Activated B cell treated with CpG ODN at 0.5 μM for 24 hours (primary cell): ENCODE measurements at regions of chr10 and their contacts with region 1.

Region 1: GRCh38 chr10:112471878-112472487 is 25.0 kb downstream of the VTI1A start:
- DNase-seq: no peak
- ATAC-seq: peak; percentile 52
- H3K4me3 Mint-ChIP-seq: no peak overlapping the region
- H3K27ac Mint-ChIP-seq: no peak overlapping the region
- H3K4me1 Mint-ChIP-seq: peaks cover 4% of the 10 kb centered on the region
- H3K27me3 Mint-ChIP-seq: no peaks in the 10 kb centered on the region
- CTCF ChIP-seq: peak; percentile 63

Region 2: DNA sequence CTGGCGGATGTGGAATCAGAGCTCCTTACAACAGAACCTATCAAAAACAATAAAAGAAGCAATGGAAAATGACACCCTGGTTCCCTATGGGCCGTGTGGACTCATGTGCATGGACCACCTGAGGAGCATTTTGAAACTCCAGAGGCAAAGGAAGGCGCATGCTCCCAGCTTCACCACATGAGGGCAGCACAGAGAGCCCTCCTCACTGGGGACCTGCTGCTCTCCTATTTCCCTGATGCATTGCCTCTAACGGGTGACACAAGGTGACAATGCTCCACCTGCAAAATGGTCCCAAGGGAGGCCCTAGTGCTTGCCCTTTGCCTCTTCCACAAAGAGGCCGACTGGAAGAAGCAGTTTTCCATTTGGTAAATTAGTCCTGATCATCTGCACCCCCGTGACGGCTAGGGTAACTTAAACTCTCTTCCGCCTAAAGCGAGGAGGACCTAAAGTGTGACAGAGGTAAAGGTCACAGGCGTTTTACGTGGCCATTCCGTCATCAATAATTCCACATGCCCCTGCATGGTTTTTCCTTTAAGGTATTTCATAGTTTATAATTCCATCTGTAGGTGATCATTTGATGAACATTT is 356.1 kb before region 1 on chr10:
- CTCF ChIA-PET with region 1: no interaction called
- POLR2A ChIA-PET with region 1: no interaction called
- intact Hi-C with region 1: loop called (anchors 5 kb)
- DNase-seq: no peak
- ATAC-seq: peak; percentile 54
- H3K4me3 Mint-ChIP-seq: no peak overlapping the region
- H3K27ac Mint-ChIP-seq: no peak overlapping the region
- H3K4me1 Mint-ChIP-seq: no peaks in the 10 kb centered on the region
- H3K27me3 Mint-ChIP-seq: no peaks in the 10 kb centered on the region
- CTCF ChIP-seq: no peak

Region 3: DNA sequence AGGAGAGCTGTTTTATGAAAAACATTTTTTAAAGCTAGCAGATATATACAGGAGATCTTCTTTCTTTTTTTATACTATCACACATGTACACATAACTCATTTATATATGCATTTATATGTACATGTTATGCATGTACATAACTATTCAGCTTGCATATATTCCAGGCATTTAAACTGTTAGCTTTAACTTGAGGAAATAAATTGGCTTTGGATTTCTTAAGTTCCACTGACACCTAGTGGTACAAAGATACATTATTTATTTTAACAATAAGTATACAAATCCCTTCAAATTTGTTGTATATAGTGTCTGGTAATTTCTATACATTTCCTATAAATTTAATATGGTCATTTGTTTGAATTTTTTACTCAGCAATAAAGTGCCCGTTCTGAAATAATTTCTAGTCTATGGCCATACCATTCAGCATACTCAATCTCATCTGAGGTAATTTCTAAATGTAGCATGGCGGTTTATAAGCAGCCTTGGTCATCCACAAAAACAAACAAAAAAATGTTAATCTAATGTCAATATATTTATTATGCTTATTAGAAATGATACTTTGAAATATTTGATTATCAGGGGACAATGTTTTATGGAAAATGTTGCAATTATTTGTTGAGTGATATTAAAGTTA is 36.9 kb before region 1 on chr10:
- CTCF ChIA-PET with region 1: interaction called, 8 read pairs
- POLR2A ChIA-PET with region 1: no interaction called
- intact Hi-C with region 1: loop called (anchors 5 kb)
- DNase-seq: no peak
- ATAC-seq: no peak
- H3K4me3 Mint-ChIP-seq: no peak overlapping the region
- H3K27ac Mint-ChIP-seq: no peak overlapping the region
- H3K4me1 Mint-ChIP-seq: no peaks in the 10 kb centered on the region
- H3K27me3 Mint-ChIP-seq: no peaks in the 10 kb centered on the region
- CTCF ChIP-seq: no peak

Region 4: GRCh38 chr10:112461029-112461887 is 10.7 kb before region 1 on chr10:
- CTCF ChIA-PET with region 1: interaction called, 18 read pairs
- POLR2A ChIA-PET with region 1: no interaction called
- intact Hi-C with region 1: no loop called
- DNase-seq: no peak
- ATAC-seq: no peak
- H3K4me3 Mint-ChIP-seq: no peak overlapping the region
- H3K27ac Mint-ChIP-seq: no peak overlapping the region
- H3K4me1 Mint-ChIP-seq: peaks cover 10% of the 10 kb centered on the region
- H3K27me3 Mint-ChIP-seq: no peaks in the 10 kb centered on the region
- CTCF ChIP-seq: no peak

Region 5: DNA sequence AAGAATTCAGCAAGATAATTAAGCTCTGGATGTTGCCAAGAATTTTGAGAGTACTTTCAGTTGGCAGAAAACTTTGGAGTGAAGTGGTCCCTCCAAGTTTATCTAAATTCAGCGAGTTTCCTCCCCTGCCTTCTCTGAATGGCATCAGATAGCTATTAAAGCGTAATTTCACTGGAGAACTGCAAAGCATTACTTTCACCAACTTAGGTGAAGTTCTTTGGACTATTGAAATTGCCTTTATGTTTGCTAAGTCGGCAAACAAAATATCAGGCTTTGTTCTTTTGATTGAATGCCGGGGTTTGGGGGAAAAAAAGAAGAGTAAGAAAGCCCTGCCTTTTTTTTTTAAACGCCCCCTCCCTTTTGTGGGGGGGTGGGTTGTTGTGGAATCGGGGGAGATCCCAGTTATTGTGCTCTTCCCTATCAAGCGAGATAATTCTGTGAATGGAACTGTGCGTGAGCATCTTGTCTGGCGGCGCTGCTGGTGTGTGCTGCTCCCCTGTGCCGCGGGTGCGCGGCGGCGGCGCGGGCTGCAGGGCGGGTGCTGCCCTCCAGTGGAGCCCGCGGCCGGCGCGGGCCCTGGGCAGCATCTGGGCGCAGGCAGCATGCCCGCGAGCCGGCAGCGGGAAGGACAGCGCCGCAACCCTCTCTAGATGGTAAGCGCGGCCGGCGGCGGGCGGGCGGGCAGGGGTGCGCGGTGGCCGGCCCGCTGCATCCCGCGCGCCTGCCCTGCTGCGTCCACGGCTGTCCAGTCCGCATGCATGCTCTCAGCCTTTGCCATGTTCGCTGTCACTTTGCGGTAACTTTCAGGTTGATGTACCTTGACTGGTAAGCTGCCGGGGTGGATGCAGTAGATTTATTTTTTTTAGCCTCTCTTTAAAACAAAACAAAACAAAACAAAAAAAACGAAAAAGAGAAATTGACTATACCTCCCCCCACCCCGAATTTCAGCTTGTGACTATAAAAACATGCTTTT is 654.5 kb after region 1 on chr10:
- CTCF ChIA-PET with region 1: no interaction called
- POLR2A ChIA-PET with region 1: no interaction called
- intact Hi-C with region 1: loop called (anchors 10 kb)
- DNase-seq: peak; percentile 22
- ATAC-seq: peak; percentile 71
- H3K4me3 Mint-ChIP-seq: peak overlapping the region; percentile 25
- H3K27ac Mint-ChIP-seq: no peak overlapping the region
- H3K4me1 Mint-ChIP-seq: peaks cover 3% of the 10 kb centered on the region
- H3K27me3 Mint-ChIP-seq: peaks cover 42% of the 10 kb centered on the region
- CTCF ChIP-seq: no peak

Region 6: GRCh38 chr10:113521123-113521795 is 1049.3 kb after region 1 on chr10:
- CTCF ChIA-PET with region 1: interaction called, 5 read pairs
- POLR2A ChIA-PET with region 1: no interaction called
- intact Hi-C with region 1: loop called (anchors 2 kb)
- DNase-seq: no peak
- ATAC-seq: no peak
- H3K4me3 Mint-ChIP-seq: no peak overlapping the region
- H3K27ac Mint-ChIP-seq: no peak overlapping the region
- H3K4me1 Mint-ChIP-seq: no peaks in the 10 kb centered on the region
- H3K27me3 Mint-ChIP-seq: peaks cover 12% of the 10 kb centered on the region
- CTCF ChIP-seq: no peak